Activated CD8-positive, alpha-beta T cell treated with anti-CD3 and anti-CD28 coated beads for 36 hours (primary cell): ENCODE measurements at regions of chr1 and their contacts with region 1.

Region 1: DNA sequence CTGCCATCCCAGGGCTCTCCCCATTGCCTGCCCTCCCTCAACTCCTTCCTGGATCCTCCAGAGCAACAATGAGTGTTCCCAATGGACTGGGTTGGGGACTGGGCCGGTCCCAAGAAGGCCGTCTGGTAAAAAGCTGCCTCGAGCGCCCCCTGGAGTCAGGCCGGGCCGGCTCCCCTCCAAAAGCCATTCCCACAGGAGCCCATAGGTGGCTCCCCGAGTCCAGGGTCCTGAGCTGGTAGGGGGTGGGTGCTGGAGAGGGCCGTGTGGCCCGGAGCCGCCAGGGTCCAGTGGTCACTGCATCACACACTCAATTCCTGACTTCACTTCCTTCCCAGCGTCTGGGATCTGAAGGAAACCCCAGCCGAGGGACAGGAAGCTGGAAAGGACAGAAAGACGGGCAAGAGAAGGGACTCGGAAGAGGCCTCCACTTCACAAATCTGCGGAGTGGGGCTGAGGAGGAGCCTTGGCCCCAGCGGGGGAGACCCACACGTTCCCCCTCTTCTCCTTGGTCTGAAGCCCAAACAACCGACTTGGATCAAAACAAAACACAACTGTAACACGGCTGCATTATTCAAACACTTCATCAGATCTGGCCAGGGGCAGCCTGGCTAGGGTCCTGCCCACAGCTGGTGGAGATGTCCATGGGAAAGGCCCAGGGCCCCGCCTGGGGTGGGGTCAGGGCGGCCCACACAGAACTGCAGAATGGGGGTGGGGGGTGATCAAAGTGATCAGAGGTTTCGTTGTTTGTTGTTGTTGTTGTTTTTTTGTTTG is 10.9 kb upstream of the ALDH4A1 start:
- DNase-seq: peak; percentile 83
- ATAC-seq: peak; percentile 92
- H3K4me3 Mint-ChIP-seq: no peak overlapping the region
- H3K27ac Mint-ChIP-seq: peak overlapping the region; percentile 76
- H3K4me1 Mint-ChIP-seq: peaks cover 23% of the 10 kb centered on the region
- H3K27me3 Mint-ChIP-seq: no peaks in the 10 kb centered on the region
- CTCF ChIP-seq: peak; percentile 98

Region 2: GRCh38 chr1:18644973-18645746 is 268.1 kb before region 1 on chr1:
- CTCF ChIA-PET with region 1: no interaction called
- POLR2A ChIA-PET with region 1: no interaction called
- intact Hi-C with region 1: no loop called
- DNase-seq: no peak
- ATAC-seq: peak; percentile 30
- H3K4me3 Mint-ChIP-seq: peak overlapping the region; percentile 11
- H3K27ac Mint-ChIP-seq: no peak overlapping the region
- H3K4me1 Mint-ChIP-seq: peaks cover 35% of the 10 kb centered on the region
- H3K27me3 Mint-ChIP-seq: peaks cover 81% of the 10 kb centered on the region
- CTCF ChIP-seq: no peak

Region 3: DNA sequence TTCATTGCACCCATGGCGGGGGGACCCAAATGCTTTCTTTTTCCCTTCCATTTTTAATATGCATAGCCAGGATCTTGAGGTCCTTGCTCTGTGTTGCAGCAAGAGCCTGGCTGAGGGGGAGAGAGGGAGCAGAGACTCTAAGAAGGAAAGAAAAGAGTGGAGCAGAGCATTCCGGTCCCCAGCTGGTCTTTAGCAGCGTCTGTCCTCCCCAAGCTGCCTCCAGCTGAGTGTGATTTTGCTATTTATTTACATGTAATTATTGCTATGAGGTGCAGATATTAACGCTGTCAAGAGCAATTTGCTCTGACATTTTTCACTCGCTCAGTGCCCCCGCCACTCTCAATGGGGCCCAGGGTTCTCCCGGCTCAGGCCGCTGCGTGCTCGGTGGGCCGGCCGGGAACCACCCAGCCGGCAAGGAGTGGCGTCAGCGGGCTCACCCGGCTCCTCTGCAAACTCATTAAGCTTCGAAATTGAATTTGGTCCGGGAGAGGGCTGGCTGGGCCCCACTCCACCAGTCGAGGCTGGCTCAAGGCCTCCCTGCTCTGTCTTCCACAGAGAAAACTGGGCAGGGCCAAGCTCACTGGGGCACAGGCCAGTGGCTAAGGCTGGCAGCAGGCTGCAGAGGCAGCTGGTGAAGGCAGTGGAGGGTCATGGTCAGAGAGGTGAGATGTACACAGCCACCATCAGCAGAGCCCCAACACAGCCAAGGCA is 189.4 kb before region 1 on chr1:
- CTCF ChIA-PET with region 1: no interaction called
- POLR2A ChIA-PET with region 1: no interaction called
- intact Hi-C with region 1: no loop called
- DNase-seq: no peak
- ATAC-seq: no peak
- H3K4me3 Mint-ChIP-seq: no peak overlapping the region
- H3K27ac Mint-ChIP-seq: no peak overlapping the region
- H3K4me1 Mint-ChIP-seq: no peaks in the 10 kb centered on the region
- H3K27me3 Mint-ChIP-seq: peaks cover 52% of the 10 kb centered on the region
- CTCF ChIP-seq: no peak

Region 4: DNA sequence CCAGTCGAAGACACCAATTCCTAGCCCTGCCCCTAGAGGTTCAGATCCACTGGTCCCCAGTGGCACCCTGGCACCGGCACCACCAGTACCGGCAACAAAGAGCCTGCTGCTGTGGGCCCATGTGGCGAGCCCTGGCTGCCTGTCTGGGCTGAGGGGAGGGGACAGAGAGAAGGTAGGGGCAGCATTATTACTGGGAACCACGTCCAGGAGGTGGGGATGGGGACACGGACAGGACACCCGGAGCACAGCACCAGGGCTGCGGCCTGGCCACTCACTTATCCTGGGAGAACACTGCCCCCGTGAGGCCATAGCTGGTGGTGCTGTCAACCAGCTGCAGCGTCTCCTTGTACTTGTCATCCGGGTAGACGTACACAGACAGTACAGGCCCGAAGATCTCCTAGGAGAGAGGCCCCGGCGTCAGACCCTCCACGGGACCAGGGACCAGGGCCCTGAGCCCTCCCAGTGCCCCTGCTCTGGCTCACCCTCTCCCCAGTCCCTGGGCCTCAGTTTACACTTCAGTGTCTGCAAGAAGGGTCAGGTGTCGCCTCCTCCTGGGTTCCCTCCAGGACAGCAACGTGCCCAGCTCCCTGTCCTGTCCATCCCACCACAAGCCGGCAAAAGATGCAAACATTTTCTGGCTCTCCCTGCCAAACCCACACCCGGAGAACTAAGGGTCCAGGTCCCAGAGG is 38.0 kb before region 1 on chr1:
- CTCF ChIA-PET with region 1: no interaction called
- POLR2A ChIA-PET with region 1: no interaction called
- intact Hi-C with region 1: no loop called
- DNase-seq: peak; percentile 87
- ATAC-seq: peak; percentile 92
- H3K4me3 Mint-ChIP-seq: no peak overlapping the region
- H3K27ac Mint-ChIP-seq: no peak overlapping the region
- H3K4me1 Mint-ChIP-seq: no peaks in the 10 kb centered on the region
- H3K27me3 Mint-ChIP-seq: no peaks in the 10 kb centered on the region
- CTCF ChIP-seq: peak; percentile 86

Region 5: DNA sequence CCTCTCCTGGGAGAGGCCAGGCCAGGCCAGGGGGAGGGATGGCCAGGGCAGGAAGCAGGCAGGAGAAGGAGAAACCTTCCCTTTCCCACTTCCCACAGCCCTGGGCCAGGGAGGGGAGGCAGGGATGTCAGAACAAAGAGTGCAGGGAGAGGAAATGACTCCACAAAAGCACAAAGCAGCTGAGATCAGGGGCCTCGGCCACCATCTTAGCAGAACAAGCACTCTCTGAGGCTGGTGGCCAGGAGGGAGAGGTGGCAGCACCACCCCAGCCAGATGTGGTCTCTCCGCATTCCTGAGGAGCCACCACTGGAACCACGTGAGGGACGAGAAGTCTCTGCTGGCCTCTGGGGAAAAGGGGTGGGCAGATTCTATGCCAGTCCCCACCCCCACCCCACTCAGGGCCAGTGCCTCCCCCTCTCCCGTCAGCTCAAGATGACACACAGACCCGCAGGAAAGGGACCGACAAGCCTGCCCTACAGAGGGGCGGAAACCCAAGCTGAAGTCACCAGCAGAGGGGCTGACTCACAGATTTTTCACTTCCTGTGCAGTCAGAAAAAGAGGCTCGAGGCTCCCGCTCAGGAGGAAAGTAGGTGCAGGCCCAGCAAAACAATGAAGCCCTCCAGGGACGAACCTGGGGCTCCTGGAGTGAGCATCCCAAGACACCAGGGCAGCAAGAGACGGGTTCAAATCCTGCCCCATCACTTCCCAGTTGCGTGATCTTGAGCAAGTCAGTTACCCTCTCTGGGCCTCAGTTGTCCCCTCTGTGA is 13.2 kb after region 1 on chr1:
- CTCF ChIA-PET with region 1: interaction called, 75 read pairs
- POLR2A ChIA-PET with region 1: interaction called, 23 read pairs
- intact Hi-C with region 1: no loop called
- DNase-seq: peak; percentile 94
- ATAC-seq: peak; percentile 88
- H3K4me3 Mint-ChIP-seq: peak overlapping the region; percentile 82
- H3K27ac Mint-ChIP-seq: peak overlapping the region; percentile 99
- H3K4me1 Mint-ChIP-seq: peaks cover 81% of the 10 kb centered on the region
- H3K27me3 Mint-ChIP-seq: no peaks in the 10 kb centered on the region
- CTCF ChIP-seq: no peak

Region 6: GRCh38 chr1:18949686-18950400 is 36.6 kb after region 1 on chr1:
- CTCF ChIA-PET with region 1: interaction called, 45 read pairs
- POLR2A ChIA-PET with region 1: interaction called, 4 read pairs
- intact Hi-C with region 1: loop called (anchors 5 kb)
- DNase-seq: peak; percentile 42
- ATAC-seq: no peak
- H3K4me3 Mint-ChIP-seq: peak overlapping the region; percentile 82
- H3K27ac Mint-ChIP-seq: peak overlapping the region; percentile 93
- H3K4me1 Mint-ChIP-seq: peaks cover 95% of the 10 kb centered on the region
- H3K27me3 Mint-ChIP-seq: no peaks in the 10 kb centered on the region
- CTCF ChIP-seq: peak; percentile 20

Region 7: DNA sequence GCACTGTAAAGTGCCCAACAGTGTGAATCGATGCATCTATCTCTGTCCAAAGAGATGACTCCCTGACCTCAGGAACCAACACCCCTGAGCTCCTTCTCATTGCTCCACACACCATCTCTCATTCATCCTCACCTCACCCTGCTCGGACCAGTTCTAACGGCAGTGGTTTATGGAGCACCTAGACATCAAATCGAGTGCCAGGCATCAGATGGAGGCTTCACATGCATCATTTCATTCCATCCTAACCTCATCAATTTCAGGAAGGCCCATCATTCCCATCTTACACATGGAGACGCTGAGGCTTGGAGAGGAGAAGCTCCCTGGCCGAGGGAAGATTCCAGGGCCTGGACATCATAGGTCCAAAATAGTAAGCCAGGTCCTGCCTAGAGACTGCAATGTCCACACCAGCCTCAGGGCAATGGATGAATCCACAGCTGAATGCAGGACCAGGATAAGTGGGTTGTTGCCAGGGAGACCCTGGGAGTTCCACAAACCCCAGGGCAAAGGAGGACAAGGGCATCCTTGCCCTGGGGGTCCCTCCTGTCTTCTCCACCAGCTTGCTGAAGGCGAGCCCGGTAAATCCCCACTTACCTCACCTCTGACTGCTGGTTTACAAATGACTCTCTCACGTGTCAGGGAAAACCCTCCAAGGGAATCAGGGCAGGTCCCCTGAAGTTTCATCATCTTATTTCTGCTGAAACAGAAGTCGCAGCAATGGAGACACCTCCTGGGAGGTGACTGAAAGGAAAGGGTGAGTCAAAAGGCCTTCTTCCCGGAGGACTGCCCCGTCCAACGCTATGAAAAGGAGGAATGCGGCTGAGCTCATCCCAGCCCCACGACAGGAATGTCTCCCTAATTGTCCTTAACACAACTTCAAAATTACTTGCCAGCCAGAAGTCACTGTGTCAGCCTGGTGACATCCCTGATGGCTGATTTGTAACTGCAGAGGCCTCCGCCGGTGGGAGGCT is 52.2 kb after region 1 on chr1:
- CTCF ChIA-PET with region 1: interaction called, 14 read pairs
- POLR2A ChIA-PET with region 1: no interaction called
- intact Hi-C with region 1: no loop called
- DNase-seq: peak; percentile 71
- ATAC-seq: peak; percentile 84
- H3K4me3 Mint-ChIP-seq: no peak overlapping the region
- H3K27ac Mint-ChIP-seq: peak overlapping the region; percentile 78
- H3K4me1 Mint-ChIP-seq: peaks cover 16% of the 10 kb centered on the region
- H3K27me3 Mint-ChIP-seq: no peaks in the 10 kb centered on the region
- CTCF ChIP-seq: no peak

Region 8: GRCh38 chr1:19074902-19075721 is 161.9 kb after region 1 on chr1:
- CTCF ChIA-PET with region 1: interaction called, 18 read pairs
- POLR2A ChIA-PET with region 1: no interaction called
- intact Hi-C with region 1: loop called (anchors 10 kb)
- DNase-seq: no peak
- ATAC-seq: peak; percentile 34
- H3K4me3 Mint-ChIP-seq: no peak overlapping the region
- H3K27ac Mint-ChIP-seq: peak overlapping the region; percentile 53
- H3K4me1 Mint-ChIP-seq: peaks cover 33% of the 10 kb centered on the region
- H3K27me3 Mint-ChIP-seq: no peaks in the 10 kb centered on the region
- CTCF ChIP-seq: no peak